CD8-positive, alpha-beta T cell (primary cell): ENCODE measurements at regions of chr20 and their contacts with region 1.

Region 1: GRCh38 chr20:63707549-63708300 is at the starts of genes ARFRP1 and ZGPAT:
- DNase-seq: peak; percentile 70 to 94 (median 86)
- ATAC-seq: peak; percentile 79
- H3K4me3 ChIP-seq: peak within 1 kb of the TSS; percentile 67 to 97
- H3K4me3 Mint-ChIP-seq: peak within 1 kb of the TSS; percentile 90
- H3K27ac ChIP-seq: peak within 1 kb of the TSS; percentile 51 to 71
- H3K27ac Mint-ChIP-seq: peak within 1 kb of the TSS; percentile 90
- H3K4me1 ChIP-seq: peaks cover 43% of the 10 kb centered on the region
- H3K4me1 Mint-ChIP-seq: peaks cover 42% of the 10 kb centered on the region
- H3K27me3 ChIP-seq: no peaks in the 10 kb centered on the region
- H3K27me3 Mint-ChIP-seq: no peaks in the 10 kb centered on the region
- CTCF ChIP-seq: no peak
- total RNA-seq, gene ARFRP1: 25.1 to 28.6 TPM
- total RNA-seq, gene ZGPAT: 25.5 to 25.7 TPM

Region 2: DNA sequence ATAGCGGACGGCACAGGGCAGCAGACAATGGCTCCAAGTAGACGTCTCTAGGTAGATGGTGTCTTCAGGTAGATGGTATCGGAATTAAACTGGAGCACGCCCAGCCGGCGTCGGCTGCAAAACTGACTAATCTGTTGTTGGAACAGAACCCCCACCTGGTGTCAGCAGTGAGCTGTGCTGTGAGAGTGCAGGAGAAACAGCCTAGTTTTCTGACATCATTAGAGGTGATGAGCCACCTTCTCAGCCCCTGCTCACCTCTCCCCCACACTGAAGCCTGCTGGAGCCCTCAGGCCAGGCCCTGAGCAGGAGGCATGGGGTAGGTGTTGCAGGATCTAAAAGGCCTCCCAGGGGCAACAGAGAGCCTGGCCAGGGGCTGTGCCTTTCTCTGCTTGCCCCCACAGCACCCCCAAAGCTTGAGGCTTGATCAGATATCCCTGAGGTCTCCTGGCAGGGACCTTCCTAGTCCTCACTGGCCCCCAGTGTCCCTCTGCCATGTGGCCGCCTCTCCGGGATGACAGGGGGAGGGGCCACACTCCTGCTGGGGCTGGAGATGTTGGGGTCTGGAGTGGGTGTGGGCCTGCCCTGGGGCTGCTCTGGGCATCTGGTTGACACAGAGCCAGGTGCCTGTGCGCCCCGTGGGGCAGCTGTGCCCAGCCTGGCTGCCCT is 126.8 kb before region 1 on chr20:
- CTCF ChIA-PET with region 1: no interaction called
- POLR2A ChIA-PET with region 1: no interaction called
- intact Hi-C with region 1: loop called in 1 of 2 experiments (anchors 2 kb)
- DNase-seq: peak; percentile 58 to 84 (median 77)
- ATAC-seq: peak; percentile 99
- H3K4me3 ChIP-seq: no peak overlapping the region
- H3K4me3 Mint-ChIP-seq: no peak overlapping the region
- H3K27ac ChIP-seq: no peak overlapping the region
- H3K27ac Mint-ChIP-seq: no peak overlapping the region
- H3K4me1 ChIP-seq: peaks cover 5% of the 10 kb centered on the region
- H3K4me1 Mint-ChIP-seq: peaks cover 3% of the 10 kb centered on the region
- H3K27me3 ChIP-seq: no peaks in the 10 kb centered on the region
- H3K27me3 Mint-ChIP-seq: no peaks in the 10 kb centered on the region
- CTCF ChIP-seq: peak; percentile 64

Region 3: GRCh38 chr20:63739130-63740069 is 31.7 kb after region 1 on chr20 and contains the start of gene SLC2A4RG:
- CTCF ChIA-PET with region 1: interaction called, 44 read pairs
- POLR2A ChIA-PET with region 1: interaction called, 73 read pairs
- intact Hi-C with region 1: loop called (anchors 1 kb)
- DNase-seq: peak; percentile 37 to 88 (median 66)
- ATAC-seq: peak; percentile 17
- H3K4me3 ChIP-seq: peak within 1 kb of the TSS; percentile 80 to 94
- H3K4me3 Mint-ChIP-seq: peak within 1 kb of the TSS; percentile 92
- H3K27ac ChIP-seq: peak within 1 kb of the TSS; percentile 40 to 48
- H3K27ac Mint-ChIP-seq: no peak within 1 kb of the TSS
- H3K4me1 ChIP-seq: peaks cover 41% of the 10 kb centered on the region
- H3K4me1 Mint-ChIP-seq: peaks cover 16% of the 10 kb centered on the region
- H3K27me3 ChIP-seq: no peaks in the 10 kb centered on the region
- H3K27me3 Mint-ChIP-seq: no peaks in the 10 kb centered on the region
- CTCF ChIP-seq: no peak
- total RNA-seq, gene SLC2A4RG: 79.3 to 90.0 TPM

Region 4: DNA sequence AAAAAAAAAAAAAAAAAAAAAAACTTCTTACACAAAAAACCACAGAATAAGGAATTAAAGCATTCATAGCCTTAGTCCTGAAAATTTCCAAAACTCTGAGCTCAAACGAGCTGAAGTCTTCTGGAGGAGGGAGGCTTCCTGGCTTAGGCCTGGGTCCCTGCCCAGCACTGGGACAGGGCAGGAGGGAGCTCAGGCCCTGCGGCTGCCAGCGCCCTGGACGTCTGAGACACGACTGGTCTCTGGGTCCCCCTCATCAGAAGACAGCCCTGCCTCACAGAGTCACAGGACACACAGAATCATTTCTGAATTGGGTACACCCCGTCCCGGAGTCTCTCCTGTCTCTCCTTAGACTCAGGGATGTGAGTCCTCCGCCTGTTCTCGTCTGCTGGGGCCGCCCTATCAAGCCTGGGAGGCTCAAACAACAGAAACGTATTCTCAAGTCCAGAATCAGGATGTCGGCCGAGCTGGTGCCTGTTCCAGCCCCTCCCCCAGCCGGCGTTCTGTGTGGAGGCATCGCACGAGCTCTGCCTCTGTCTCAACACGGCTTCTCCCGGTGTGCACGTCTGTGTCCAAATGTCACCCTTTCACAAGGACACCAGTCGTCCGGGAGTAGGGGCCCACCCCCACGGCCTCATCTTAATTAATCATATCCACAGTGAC is 83.9 kb after region 1 on chr20:
- CTCF ChIA-PET with region 1: interaction called, 39 read pairs
- POLR2A ChIA-PET with region 1: interaction called, 3 read pairs
- intact Hi-C with region 1: loop called (anchors 1 kb)
- DNase-seq: no peak
- ATAC-seq: no peak
- H3K4me3 ChIP-seq: no peak overlapping the region
- H3K4me3 Mint-ChIP-seq: no peak overlapping the region
- H3K27ac ChIP-seq: no peak overlapping the region
- H3K27ac Mint-ChIP-seq: no peak overlapping the region
- H3K4me1 ChIP-seq: no peaks in the 10 kb centered on the region
- H3K4me1 Mint-ChIP-seq: peaks cover 6% of the 10 kb centered on the region
- H3K27me3 ChIP-seq: no peaks in the 10 kb centered on the region
- H3K27me3 Mint-ChIP-seq: peaks cover 8% of the 10 kb centered on the region
- CTCF ChIP-seq: no peak

Region 5: GRCh38 chr20:63894358-63895201 is 186.9 kb after region 1 on chr20 and contains the start of gene DNAJC5:
- CTCF ChIA-PET with region 1: no interaction called
- POLR2A ChIA-PET with region 1: no interaction called
- intact Hi-C with region 1: loop called in 1 of 2 experiments (anchors 1 kb)
- DNase-seq: peak; percentile 93 to 99 (median 97)
- ATAC-seq: peak; percentile 92
- H3K4me3 ChIP-seq: peak within 1 kb of the TSS; percentile 46 to 66
- H3K4me3 Mint-ChIP-seq: peak within 1 kb of the TSS; percentile 95
- H3K27ac ChIP-seq: peak within 1 kb of the TSS; percentile 55 to 65
- H3K27ac Mint-ChIP-seq: peak within 1 kb of the TSS; percentile 96
- H3K4me1 ChIP-seq: peaks cover 41% of the 10 kb centered on the region
- H3K4me1 Mint-ChIP-seq: peaks cover 44% of the 10 kb centered on the region
- H3K27me3 ChIP-seq: no peaks in the 10 kb centered on the region
- H3K27me3 Mint-ChIP-seq: no peaks in the 10 kb centered on the region
- CTCF ChIP-seq: no peak
- total RNA-seq, gene DNAJC5: 24.3 TPM

Region 6: DNA sequence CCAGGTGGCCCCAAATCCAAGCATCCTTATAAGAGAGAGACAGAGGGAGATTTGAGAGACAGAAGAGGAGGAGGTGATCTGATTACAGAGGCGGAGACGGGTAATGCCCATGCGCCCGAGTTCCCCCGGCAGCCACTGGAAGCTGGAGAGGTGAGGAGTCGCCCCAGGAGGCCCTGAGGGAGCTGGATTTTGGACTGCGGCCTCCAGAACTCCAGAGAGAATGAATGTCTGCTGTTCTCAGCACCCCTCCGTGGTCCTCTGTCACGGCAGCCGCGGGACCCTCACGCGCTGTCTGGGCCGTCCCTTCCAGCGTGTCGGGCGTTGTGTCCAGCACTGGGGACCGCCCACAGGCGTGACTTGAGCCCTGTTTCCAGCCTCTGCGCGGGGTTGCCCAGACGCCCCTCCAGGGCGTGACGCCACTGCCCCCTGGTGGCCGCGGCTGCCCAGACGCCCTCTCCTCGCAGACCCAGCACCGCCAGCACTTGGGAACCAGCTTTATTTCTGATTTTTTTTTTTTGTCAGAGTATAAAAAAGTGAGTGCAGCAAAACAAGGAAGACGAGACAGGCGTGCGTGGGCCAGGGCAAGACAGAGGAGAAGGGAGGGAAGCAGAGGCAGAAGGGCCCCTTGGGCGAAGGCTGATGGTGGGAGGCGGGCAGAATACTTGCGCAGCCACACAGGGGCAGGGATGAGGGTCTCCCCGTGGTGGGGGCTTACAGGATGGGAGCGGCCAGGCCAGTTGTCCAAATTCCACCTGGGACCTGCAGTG is 266.1 kb after region 1 on chr20:
- CTCF ChIA-PET with region 1: interaction called, 3 read pairs
- POLR2A ChIA-PET with region 1: no interaction called
- intact Hi-C with region 1: loop called in 1 of 2 experiments (anchors 1 kb)
- DNase-seq: peak; percentile 57 to 87 (median 77)
- ATAC-seq: peak; percentile 51
- H3K4me3 ChIP-seq: no peak overlapping the region
- H3K4me3 Mint-ChIP-seq: no peak overlapping the region
- H3K27ac ChIP-seq: no peak overlapping the region
- H3K27ac Mint-ChIP-seq: peak overlapping the region; percentile 53
- H3K4me1 ChIP-seq: peaks cover 35% of the 10 kb centered on the region
- H3K4me1 Mint-ChIP-seq: peaks cover 42% of the 10 kb centered on the region
- H3K27me3 ChIP-seq: no peaks in the 10 kb centered on the region
- H3K27me3 Mint-ChIP-seq: no peaks in the 10 kb centered on the region
- CTCF ChIP-seq: peak; percentile 99

Region 7: GRCh38 chr20:64119681-64120341 is 412.1 kb after region 1 on chr20:
- CTCF ChIA-PET with region 1: interaction called, 4 read pairs
- POLR2A ChIA-PET with region 1: no interaction called
- intact Hi-C with region 1: loop called in 1 of 2 experiments (anchors 2 kb)
- DNase-seq: peak in 3 of 9 experiments; percentile 2 to 50 (median 27)
- ATAC-seq: peak; percentile 4
- H3K4me3 ChIP-seq: peak overlapping the region; percentile 36 to 38
- H3K4me3 Mint-ChIP-seq: peak overlapping the region; percentile 72
- H3K27ac ChIP-seq: peak overlapping the region in 1 of 2 experiments; percentile 39
- H3K27ac Mint-ChIP-seq: peak overlapping the region; percentile 62
- H3K4me1 ChIP-seq: peaks cover 9% of the 10 kb centered on the region
- H3K4me1 Mint-ChIP-seq: peaks cover 8% of the 10 kb centered on the region
- H3K27me3 ChIP-seq: peaks cover 0 to 3% of the 10 kb centered on the region in 2 experiments
- H3K27me3 Mint-ChIP-seq: peaks cover 4% of the 10 kb centered on the region
- CTCF ChIP-seq: no peak